ENCODE measurements at regions of chr15 and their contacts with region 1.

Region 1: GRCh38 chr15:37100109-37100965 is at the start of gene MEIS2:
- DNase-seq: peak; percentile 83
- ATAC-seq: peak; percentile 70
- H3K4me3 ChIP-seq: peak within 1 kb of the TSS; percentile 83 to 92 (median 88)
- H3K27ac ChIP-seq: peak within 1 kb of the TSS; percentile 96
- H3K4me1 ChIP-seq: peaks cover 26% of the 10 kb centered on the region
- H3K27me3 ChIP-seq: no peaks in the 10 kb centered on the region; a peak in 1 of 5 replicates
- CTCF ChIP-seq: no peak
- EP300 ChIP-seq: no peak
- POLR2A ChIP-seq: peak; percentile 21 to 50; a peak in 3 of 4 replicates
- RAD21 ChIP-seq: no peak
- total RNA-seq, gene MEIS2: 12.4 and 12.6 TPM in 2 replicates

Region 2: DNA sequence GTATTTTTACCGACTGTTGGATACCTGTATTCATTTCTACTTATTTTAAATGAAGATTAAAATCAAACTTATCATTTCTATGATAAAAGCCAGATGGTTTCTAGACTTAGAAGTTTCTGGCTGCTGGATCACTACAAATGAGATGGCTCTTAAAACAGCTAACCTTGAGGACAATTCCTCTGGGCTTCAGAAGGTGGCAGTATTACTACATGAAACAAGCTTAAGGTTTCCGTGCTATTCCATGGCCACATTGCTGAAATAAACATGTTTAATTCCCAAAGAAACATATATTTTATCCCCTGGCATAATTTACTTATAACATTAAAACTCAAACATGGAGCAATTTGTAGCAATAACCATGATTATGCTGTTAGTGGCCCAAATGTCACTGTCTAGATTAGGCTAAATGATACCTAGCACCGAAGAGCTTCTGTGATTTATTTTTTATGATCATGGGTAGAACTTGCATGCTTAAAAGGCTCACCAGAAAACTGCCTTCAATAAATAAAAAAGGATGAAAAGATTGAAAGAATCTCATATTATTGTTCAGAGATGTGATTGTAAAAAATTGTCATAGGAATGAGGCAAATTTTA is 1811.2 kb before region 1 on chr15:
- CTCF ChIA-PET with region 1: no interaction called
- POLR2A ChIA-PET with region 1: no interaction called
- in situ Hi-C with region 1: loop called (anchors 25 kb)
- intact Hi-C with region 1: no loop called
- DNase-seq: peak; percentile 44
- ATAC-seq: peak; percentile 66
- H3K4me3 ChIP-seq: no peak overlapping the region
- H3K27ac ChIP-seq: no peak overlapping the region
- H3K4me1 ChIP-seq: peaks cover 12% of the 10 kb centered on the region
- H3K27me3 ChIP-seq: no peaks in the 10 kb centered on the region
- CTCF ChIP-seq: peak; percentile 75
- EP300 ChIP-seq: no peak
- POLR2A ChIP-seq: no peak
- RAD21 ChIP-seq: peak; percentile 46; the same call in 1 of the 2 replicates

Region 3: DNA sequence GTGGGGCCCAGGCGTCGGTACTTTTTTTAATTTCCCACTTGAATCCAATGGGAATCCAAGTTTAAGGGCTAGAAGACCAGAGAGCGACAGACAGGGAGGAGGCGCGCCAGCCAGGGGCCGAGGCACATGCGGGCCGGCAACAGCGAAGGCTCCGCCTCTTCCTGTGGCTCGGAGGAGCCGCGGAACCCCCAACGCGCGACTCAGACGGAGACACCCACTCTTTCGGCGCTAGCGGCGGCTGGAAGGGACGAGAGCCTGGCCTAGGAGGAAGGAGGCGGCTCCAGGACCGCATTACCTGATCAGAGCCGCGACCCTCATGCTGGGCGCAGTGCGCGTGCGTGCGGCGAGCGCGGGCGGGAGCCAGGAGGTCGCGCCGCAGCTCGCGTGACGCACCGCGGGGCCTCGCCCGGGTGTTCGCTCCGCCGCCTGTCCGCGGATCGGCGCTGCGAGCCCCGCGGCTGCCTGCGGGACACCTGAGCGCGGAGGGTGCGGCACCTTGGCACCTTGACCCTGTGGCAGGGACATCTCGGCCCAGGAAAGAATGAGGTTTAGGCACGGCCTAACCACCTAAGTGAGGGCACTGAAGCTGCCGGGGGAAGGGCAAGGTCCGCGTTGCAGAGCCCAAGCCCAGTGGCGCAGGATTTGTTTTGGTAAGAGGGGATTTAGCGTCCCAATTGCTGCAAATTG is 1554.4 kb before region 1 on chr15 and contains the start of gene DPH6:
- CTCF ChIA-PET with region 1: no interaction called
- POLR2A ChIA-PET with region 1: no interaction called
- in situ Hi-C with region 1: loop called (anchors 25 kb)
- intact Hi-C with region 1: no loop called
- DNase-seq: peak; percentile 67
- ATAC-seq: peak; percentile 96
- H3K4me3 ChIP-seq: peak within 1 kb of the TSS; percentile 64 to 80 (median 79)
- H3K27ac ChIP-seq: peak within 1 kb of the TSS; percentile 91
- H3K4me1 ChIP-seq: peaks cover 24% of the 10 kb centered on the region
- H3K27me3 ChIP-seq: no peaks in the 10 kb centered on the region
- CTCF ChIP-seq: peak; percentile 8; the same call in 1 of the 2 replicates
- EP300 ChIP-seq: no peak; a peak in 1 of 4 replicates
- POLR2A ChIP-seq: peak; percentile 78 to 86
- RAD21 ChIP-seq: peak; percentile 43; the same call in 1 of the 2 replicates
- total RNA-seq, gene DPH6: 25.8 and 27.0 TPM in 2 replicates

Region 4: DNA sequence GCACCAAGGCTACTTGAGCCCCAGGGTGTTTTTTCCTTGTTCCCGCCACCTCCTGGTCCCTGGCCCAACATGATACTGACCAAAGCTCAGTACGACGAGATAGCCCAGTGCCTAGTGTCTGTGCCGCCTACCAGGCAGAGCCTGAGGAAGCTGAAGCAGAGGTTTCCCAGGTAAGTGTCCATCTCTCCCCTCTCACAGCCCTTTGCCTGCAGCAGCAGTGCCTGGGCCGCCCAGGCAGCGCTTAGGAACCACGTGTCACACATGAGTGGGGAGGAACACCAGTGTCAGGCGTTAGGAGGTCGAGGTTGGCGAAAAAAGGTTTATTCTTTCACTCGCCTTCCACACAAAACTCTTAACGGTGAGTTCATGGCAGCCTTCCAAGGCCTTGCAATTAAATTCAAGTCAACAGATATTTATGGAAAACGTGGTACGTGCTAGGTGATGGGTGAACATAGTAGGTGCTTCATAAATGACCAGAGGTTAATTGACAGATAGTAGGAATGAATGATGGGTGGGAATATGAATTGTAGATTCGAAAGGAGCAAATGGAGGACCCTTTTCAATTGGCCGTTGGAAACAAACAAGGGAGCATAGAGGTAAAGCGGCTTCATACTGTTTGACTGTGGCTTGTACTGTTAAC is 520.4 kb before region 1 on chr15:
- CTCF ChIA-PET with region 1: no interaction called
- POLR2A ChIA-PET with region 1: no interaction called
- in situ Hi-C with region 1: no loop called
- intact Hi-C with region 1: loop called (anchors 2 kb)
- DNase-seq: peak; percentile 3
- ATAC-seq: peak; percentile 78
- H3K4me3 ChIP-seq: peak overlapping the region; percentile 65 to 84 (median 79); a peak in 5 of 6 replicates
- H3K27ac ChIP-seq: peak overlapping the region; percentile 91
- H3K4me1 ChIP-seq: peaks cover 34% of the 10 kb centered on the region
- H3K27me3 ChIP-seq: peaks cover 0 to 4% of the 10 kb centered on the region in 2 experiments; a peak in 1 of 5 replicates
- CTCF ChIP-seq: no peak
- EP300 ChIP-seq: no peak
- POLR2A ChIP-seq: no peak
- RAD21 ChIP-seq: no peak

Region 5: DNA sequence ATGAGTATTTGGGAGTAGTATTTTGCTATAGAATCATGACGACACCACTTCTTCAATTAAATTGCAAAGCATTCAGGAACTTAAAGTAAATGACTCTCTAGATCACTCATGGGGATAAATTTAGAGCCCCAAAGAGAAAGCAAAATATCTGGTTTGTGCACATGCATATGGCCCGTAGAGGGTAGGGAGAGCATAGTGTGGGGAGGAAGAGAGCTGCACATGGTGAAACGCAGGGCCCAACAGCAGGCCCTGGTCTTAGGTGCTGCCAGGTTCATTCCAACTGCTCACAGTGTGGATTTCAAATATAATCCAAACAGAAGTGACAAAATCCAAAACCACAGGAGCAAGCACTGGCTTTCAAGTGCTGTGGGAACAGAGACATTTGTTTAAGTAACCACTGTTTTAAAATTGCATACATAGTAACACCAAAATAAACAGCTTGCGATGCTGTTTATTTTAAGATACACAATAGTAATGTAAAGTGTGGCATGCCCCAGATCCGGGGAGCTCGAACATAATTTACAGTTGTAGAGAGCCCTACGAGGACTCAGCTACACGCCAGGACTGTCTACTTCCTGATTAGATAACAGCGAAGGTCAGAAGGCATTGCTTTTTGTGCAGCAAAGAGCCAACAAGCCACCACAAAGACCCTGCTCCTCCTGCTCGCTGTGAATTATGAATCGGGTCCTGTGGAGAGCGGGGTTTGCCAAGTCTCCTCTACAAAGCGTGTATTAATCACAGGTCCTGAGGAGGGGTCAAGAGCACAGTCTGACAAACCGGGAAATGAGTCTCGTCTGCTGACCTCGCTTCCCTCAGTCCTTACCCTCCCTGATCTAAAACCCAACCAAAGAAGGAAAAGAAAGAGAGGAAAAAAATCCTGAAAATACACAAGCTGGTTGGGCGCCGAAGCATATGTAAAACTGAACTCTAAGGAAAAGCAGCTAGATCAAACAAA is 80.6 kb before region 1 on chr15:
- CTCF ChIA-PET with region 1: no interaction called
- POLR2A ChIA-PET with region 1: interaction called, 6 read pairs
- in situ Hi-C with region 1: no loop called
- intact Hi-C with region 1: loop called (anchors 5 kb)
- DNase-seq: peak; percentile 83
- ATAC-seq: peak; percentile 96
- H3K4me3 ChIP-seq: peak overlapping the region; percentile 29 to 54 (median 32); a peak in 5 of 6 replicates
- H3K27ac ChIP-seq: peak overlapping the region; percentile 73
- H3K4me1 ChIP-seq: peaks cover 32% of the 10 kb centered on the region
- H3K27me3 ChIP-seq: no peaks in the 10 kb centered on the region; a peak in 1 of 5 replicates
- CTCF ChIP-seq: no peak
- EP300 ChIP-seq: peak in 1 of 2 experiments; percentile 49; a peak in 1 of 4 replicates
- POLR2A ChIP-seq: peak in 1 of 2 experiments; percentile 59; a peak in 2 of 4 replicates
- RAD21 ChIP-seq: no peak

Region 6: DNA sequence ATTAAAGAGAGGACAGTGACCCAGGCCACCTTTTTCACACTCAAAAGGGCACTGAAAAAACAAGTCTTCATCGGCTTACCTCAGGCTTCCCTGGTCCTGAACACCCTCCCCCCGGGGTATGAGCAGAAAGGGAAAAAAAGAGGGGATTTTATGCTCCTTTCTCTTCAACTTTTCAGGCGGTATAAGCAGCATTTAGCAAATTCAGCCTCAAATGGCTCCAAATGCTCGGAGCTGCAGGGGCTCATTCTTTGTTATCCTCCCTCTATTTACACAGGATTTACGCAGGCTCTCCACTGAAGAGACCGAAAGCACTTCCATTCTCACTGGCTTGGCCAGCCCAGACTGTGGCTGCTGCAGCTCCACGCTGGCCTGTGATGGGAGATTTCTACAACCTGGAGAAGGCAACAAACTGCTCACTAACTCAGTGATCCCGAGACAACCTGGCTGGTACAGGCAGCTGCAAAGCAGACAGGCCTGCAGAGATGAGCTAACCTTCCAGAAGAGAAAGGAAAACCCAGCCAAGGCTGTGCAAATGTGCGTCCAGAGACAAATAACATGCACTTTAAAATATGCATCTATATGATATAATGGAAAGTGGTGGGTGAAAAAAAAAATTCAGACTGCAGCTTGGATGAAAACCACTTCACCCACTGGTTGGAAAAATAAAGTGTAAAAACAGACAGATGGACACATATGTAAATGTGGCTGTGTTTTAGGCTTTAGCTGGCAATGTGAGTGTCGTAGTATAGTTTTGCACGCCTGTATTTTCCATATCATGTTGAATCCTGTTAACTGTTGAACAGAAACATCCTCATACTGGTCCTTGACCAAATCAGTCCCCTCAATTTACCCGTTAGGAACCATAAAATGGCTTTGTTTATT is 54.2 kb before region 1 on chr15:
- CTCF ChIA-PET with region 1: no interaction called
- POLR2A ChIA-PET with region 1: no interaction called
- in situ Hi-C with region 1: loop called (anchors 10 kb)
- intact Hi-C with region 1: loop called (anchors 2 kb)
- DNase-seq: peak; percentile 56
- ATAC-seq: peak; percentile 96
- H3K4me3 ChIP-seq: peak overlapping the region in 2 of 3 experiments; percentile 22 to 30; a peak in 2 of 6 replicates
- H3K27ac ChIP-seq: peak overlapping the region; percentile 44
- H3K4me1 ChIP-seq: peaks cover 51% of the 10 kb centered on the region
- H3K27me3 ChIP-seq: no peaks in the 10 kb centered on the region
- CTCF ChIP-seq: no peak
- EP300 ChIP-seq: no peak
- POLR2A ChIP-seq: no peak
- RAD21 ChIP-seq: no peak

Measured in HepG2 (cell line).